Activated CD4-positive, alpha-beta T cell treated with anti-CD3 and anti-CD28 coated beads, Interleukin-2, amount 10 ng/mL, durations not matched to agents 7 days and 5 days (primary cell): ENCODE measurements at regions of chr20 and their contacts with region 1.

Region 1: GRCh38 chr20:20487811-20488210 is 119.9 kb downstream of the INSM1 start:
- DNase-seq: no peak
- H3K4me3 Mint-ChIP-seq: no peak overlapping the region
- H3K27ac Mint-ChIP-seq: no peak overlapping the region
- H3K4me1 Mint-ChIP-seq: peaks cover 24% of the 10 kb centered on the region
- H3K27me3 Mint-ChIP-seq: no peaks in the 10 kb centered on the region

Region 2: DNA sequence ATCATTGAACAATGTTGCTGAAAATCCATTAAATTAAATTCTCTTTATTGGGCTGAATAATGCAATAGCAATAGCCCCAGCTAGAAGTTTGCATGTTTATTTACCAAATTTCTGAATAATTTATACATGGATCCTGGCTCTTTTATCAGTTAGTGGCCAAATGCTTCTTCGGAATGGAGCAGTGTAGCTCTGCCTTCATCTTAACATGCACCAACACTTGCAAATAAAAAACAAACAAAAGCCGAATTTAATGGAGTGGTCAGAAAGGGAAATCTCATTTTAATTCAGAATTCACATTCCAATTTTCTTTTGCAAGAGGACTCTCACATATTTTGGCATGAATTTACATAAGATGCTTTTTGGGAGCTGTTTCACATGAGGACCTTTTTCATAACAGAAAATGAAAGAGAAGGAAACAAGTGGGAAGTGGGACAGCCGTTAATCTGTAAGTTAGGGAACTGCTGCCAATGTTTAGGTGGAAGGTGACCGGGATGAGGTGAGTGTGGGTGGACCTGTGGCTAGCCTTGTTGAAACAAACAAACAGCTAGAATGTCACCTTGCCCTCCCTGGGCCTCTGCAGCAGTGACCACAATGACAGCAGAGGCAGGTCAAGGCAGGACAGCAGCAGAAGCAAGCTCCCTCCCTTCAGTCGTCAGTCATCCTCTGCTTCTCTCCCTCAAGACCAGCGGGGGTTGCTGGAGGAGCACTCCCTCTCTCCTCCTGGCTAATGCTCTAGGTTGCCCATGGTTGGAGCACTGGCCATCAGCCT is 46.7 kb before region 1 on chr20:
- CTCF ChIA-PET with region 1: no interaction called
- POLR2A ChIA-PET with region 1: no interaction called
- DNase-seq: no peak
- H3K4me3 Mint-ChIP-seq: no peak overlapping the region
- H3K27ac Mint-ChIP-seq: no peak overlapping the region
- H3K4me1 Mint-ChIP-seq: peaks cover 2% of the 10 kb centered on the region
- H3K27me3 Mint-ChIP-seq: no peaks in the 10 kb centered on the region

Region 3: GRCh38 chr20:20466341-20466879 is 21.4 kb before region 1 on chr20:
- CTCF ChIA-PET with region 1: interaction called, 3 read pairs
- POLR2A ChIA-PET with region 1: interaction called, 10 read pairs
- DNase-seq: no peak
- H3K4me3 Mint-ChIP-seq: no peak overlapping the region
- H3K27ac Mint-ChIP-seq: no peak overlapping the region
- H3K4me1 Mint-ChIP-seq: peaks cover 12% of the 10 kb centered on the region
- H3K27me3 Mint-ChIP-seq: no peaks in the 10 kb centered on the region